ENCODE measurements at regions of chr2 and their contacts with region 1.

Region 1: GRCh38 chr2:231900486-231900942 is 25.7 kb downstream of the NPPC start:
- DNase-seq: peak; percentile 79 to 84 (median 84)
- ATAC-seq: peak; percentile 93 to 98 (median 96)
- H3K4me3 ChIP-seq: no peak overlapping the region
- H3K27ac ChIP-seq: no peak overlapping the region
- H3K4me1 ChIP-seq: no peaks in the 10 kb centered on the region
- H3K27me3 ChIP-seq: no peaks in the 10 kb centered on the region
- CTCF ChIP-seq: peak; percentile 72 to 88 (median 80)
- POLR2A ChIP-seq: no peak

Region 2: GRCh38 chr2:231245253-231246094 is 655.0 kb before region 1 on chr2:
- intact Hi-C with region 1: no loop called
- DNase-seq: no peak
- ATAC-seq: peak in 2 of 4 donors; percentile 42
- H3K4me3 ChIP-seq: no peak overlapping the region
- H3K27ac ChIP-seq: no peak overlapping the region
- H3K4me1 ChIP-seq: no peaks in the 10 kb centered on the region
- H3K27me3 ChIP-seq: no peaks in the 10 kb centered on the region
- CTCF ChIP-seq: no peak
- POLR2A ChIP-seq: no peak

Region 3: DNA sequence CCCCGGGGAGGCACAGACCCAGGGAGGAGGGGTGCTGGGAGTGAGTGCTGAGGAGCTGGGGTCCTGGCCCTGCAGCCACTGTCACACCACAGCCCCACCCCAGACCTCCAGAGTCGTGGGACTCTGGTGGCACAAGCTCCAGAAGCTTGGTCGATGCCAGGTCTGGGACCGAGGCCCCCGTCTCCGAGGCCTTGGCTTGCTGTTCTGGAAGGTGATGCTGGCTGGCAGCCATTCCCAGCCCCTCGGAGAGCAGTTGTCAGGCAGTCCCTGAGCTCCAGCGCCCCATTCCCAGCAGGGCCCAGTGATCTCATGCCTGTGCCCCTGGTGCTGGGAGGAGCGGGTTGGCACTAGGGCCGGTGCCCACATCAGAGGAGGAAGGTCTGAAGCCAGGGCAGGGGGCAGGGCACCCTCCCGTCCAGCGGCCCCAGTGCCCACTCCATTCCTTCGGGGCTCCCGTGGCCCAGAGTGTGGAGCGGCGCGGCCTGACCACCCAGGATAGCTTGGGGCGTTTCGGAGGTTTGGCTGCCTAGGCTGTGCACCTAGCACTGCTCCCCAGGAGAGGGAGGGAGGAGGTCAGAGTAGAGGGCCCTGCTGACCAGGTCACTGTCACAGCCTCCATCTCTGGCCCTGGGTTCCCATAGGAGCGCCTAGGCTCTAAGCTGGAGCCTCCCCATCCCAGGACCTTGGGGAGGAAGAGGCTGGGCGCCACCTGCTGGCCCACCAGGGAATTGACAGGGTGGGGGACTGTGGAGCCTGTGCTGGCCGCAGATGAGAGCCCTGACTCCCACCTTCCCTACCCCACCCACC is 538.6 kb after region 1 on chr2:
- intact Hi-C with region 1: loop called (anchors 5 to 10 kb)
- DNase-seq: peak in 1 of 3 donors; percentile 47
- ATAC-seq: peak; percentile 26 to 45 (median 35)
- H3K4me3 ChIP-seq: no peak overlapping the region
- H3K27ac ChIP-seq: no peak overlapping the region
- H3K4me1 ChIP-seq: peaks cover 0 to 4% (median 2%) of the 10 kb centered on the region in 4 donors
- H3K27me3 ChIP-seq: no peaks in the 10 kb centered on the region
- CTCF ChIP-seq: peak; percentile 42 to 61 (median 54)
- POLR2A ChIP-seq: no peak

Region 4: GRCh38 chr2:232521959-232522622 is 621.6 kb after region 1 on chr2:
- intact Hi-C with region 1: loop called in 1 of 2 experiments (anchors 10 kb)
- DNase-seq: peak in 2 of 3 donors; percentile 62 to 63
- ATAC-seq: peak; percentile 61 to 88 (median 74)
- H3K4me3 ChIP-seq: peak overlapping the region in 1 of 3 donors; percentile 19
- H3K27ac ChIP-seq: no peak overlapping the region
- H3K4me1 ChIP-seq: peaks cover 0 to 20% (median 0%) of the 10 kb centered on the region in 4 donors
- H3K27me3 ChIP-seq: peaks cover 14 to 27% of the 10 kb centered on the region in 2 donors
- CTCF ChIP-seq: peak; percentile 86 to 94 (median 90)
- POLR2A ChIP-seq: no peak

Measured in right lobe of liver (tissue), 6 donors.